Gastrocnemius medialis (tissue), 4 donors: ENCODE measurements at regions of chr11 and their contacts with region 1.

Region 1: GRCh38 chr11:18329196-18329870 is 7.0 kb downstream of the GTF2H1 start:
- DNase-seq: no peak
- ATAC-seq: no peak
- H3K4me3 ChIP-seq: no peak overlapping the region
- H3K27ac ChIP-seq: peak overlapping the region in 1 of 4 donors; percentile 1
- H3K4me1 ChIP-seq: peaks cover 5 to 8% of the 10 kb centered on the region in 2 donors
- H3K27me3 ChIP-seq: no peaks in the 10 kb centered on the region
- CTCF ChIP-seq: no peak
- POLR2A ChIP-seq: no peak

Region 2: DNA sequence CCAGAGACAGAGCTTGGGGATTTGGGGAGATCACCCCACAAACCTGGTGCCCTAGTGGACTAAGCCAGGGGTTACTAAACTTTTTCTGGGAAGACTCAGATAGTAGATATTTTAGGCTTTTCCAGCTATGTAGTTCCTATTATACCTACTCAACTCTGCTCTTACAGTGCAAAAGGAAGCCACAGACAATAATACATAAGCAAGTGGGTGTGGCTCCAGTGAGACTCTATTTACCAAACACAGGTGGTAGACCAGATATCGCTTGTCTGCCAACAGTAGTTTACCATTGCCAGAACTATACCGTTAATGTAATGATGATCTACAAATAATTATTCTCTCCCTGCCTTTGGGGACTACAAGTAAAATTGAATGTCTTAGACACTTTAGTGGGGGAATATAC is 89.7 kb after region 1 on chr11:
- in situ Hi-C with region 1: no loop called
- intact Hi-C with region 1: no loop called
- DNase-seq: no peak
- ATAC-seq: no peak
- H3K4me3 ChIP-seq: no peak overlapping the region
- H3K27ac ChIP-seq: no peak overlapping the region
- H3K4me1 ChIP-seq: no peaks in the 10 kb centered on the region
- H3K27me3 ChIP-seq: no peaks in the 10 kb centered on the region
- CTCF ChIP-seq: no peak
- POLR2A ChIP-seq: no peak

Region 3: GRCh38 chr11:18521123-18521522 is 191.8 kb after region 1 on chr11:
- in situ Hi-C with region 1: loop called in 1 of 4 experiments (anchors 10 kb)
- intact Hi-C with region 1: loop called (anchors 1 kb)
- DNase-seq: no peak
- ATAC-seq: no peak
- H3K4me3 ChIP-seq: no peak overlapping the region
- H3K27ac ChIP-seq: no peak overlapping the region
- H3K4me1 ChIP-seq: peaks cover 16 to 25% of the 10 kb centered on the region in 2 donors
- H3K27me3 ChIP-seq: no peaks in the 10 kb centered on the region
- CTCF ChIP-seq: no peak
- POLR2A ChIP-seq: no peak